ENCODE measurements at regions of chr17 and their contacts with region 1.

Region 1: DNA sequence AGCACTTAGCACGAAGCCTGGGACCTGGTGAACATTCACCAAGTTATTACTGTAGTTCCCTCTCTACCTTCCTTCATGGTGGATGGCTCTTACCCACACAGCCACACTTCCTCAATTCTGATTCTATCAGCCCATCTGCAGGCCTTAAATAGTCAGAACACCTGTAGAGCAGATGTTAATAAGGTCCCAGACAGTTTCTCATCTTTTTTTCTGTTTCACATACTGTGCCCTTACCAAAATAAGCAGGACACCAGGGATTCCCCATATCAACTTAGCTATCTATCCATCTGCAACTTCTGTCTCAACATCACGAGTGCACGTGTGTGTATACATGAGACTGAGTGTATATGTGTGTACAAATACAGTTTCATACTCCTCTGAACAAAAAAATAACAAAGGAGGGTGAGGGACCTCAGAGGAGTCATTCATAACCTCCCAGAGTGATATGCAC is 2.8 kb downstream of the RECQL5 start:
- DNase-seq: no peak
- ATAC-seq: no peak
- H3K4me3 ChIP-seq: no peak overlapping the region
- H3K27ac ChIP-seq: no peak overlapping the region
- H3K4me1 ChIP-seq: peaks cover 22% of the 10 kb centered on the region
- H3K27me3 ChIP-seq: no peaks in the 10 kb centered on the region
- CTCF ChIP-seq: no peak

Region 2: GRCh38 chr17:75645889-75646637 is 18.1 kb before region 1 on chr17:
- CTCF ChIA-PET with region 1: no interaction called
- POLR2A ChIA-PET with region 1: no interaction called
- in situ Hi-C with region 1: no loop called
- intact Hi-C with region 1: no loop called
- DNase-seq: no peak
- ATAC-seq: peak; percentile 22
- H3K4me3 ChIP-seq: no peak overlapping the region
- H3K27ac ChIP-seq: no peak overlapping the region
- H3K4me1 ChIP-seq: peaks cover 5% of the 10 kb centered on the region
- H3K27me3 ChIP-seq: no peaks in the 10 kb centered on the region
- CTCF ChIP-seq: no peak

Region 3: GRCh38 chr17:75731716-75732498 is 67.8 kb after region 1 on chr17:
- CTCF ChIA-PET with region 1: no interaction called
- POLR2A ChIA-PET with region 1: interaction called, 11 read pairs
- in situ Hi-C with region 1: no loop called
- intact Hi-C with region 1: no loop called
- DNase-seq: no peak
- ATAC-seq: no peak
- H3K4me3 ChIP-seq: no peak overlapping the region
- H3K27ac ChIP-seq: no peak overlapping the region
- H3K4me1 ChIP-seq: no peaks in the 10 kb centered on the region
- H3K27me3 ChIP-seq: no peaks in the 10 kb centered on the region
- CTCF ChIP-seq: no peak